Mammary epithelial cell (primary cell): ENCODE measurements at regions of chr9 and their contacts with region 1.

Region 1: GRCh38 chr9:98848450-98849149 is 41.1 kb downstream of the GALNT12 start:
- DNase-seq: peak; percentile 97
- H3K4me3 ChIP-seq: peak overlapping the region in 2 of 3 experiments; percentile 7 to 10
- H3K27ac ChIP-seq: no peak overlapping the region
- H3K4me1 ChIP-seq: peaks cover 17% of the 10 kb centered on the region
- H3K27me3 ChIP-seq: no peaks in the 10 kb centered on the region
- CTCF ChIP-seq: peak; percentile 97

Region 2: GRCh38 chr9:98922721-98923435 is 74.3 kb after region 1 on chr9:
- CTCF ChIA-PET with region 1: no interaction called
- dilution Hi-C with region 1: loop called (anchors 5 kb)
- in situ Hi-C with region 1: no loop called
- intact Hi-C with region 1: no loop called
- DNase-seq: no peak
- H3K4me3 ChIP-seq: no peak overlapping the region
- H3K27ac ChIP-seq: no peak overlapping the region
- H3K4me1 ChIP-seq: no peaks in the 10 kb centered on the region
- H3K27me3 ChIP-seq: peaks cover 7% of the 10 kb centered on the region
- CTCF ChIP-seq: no peak

Region 3: DNA sequence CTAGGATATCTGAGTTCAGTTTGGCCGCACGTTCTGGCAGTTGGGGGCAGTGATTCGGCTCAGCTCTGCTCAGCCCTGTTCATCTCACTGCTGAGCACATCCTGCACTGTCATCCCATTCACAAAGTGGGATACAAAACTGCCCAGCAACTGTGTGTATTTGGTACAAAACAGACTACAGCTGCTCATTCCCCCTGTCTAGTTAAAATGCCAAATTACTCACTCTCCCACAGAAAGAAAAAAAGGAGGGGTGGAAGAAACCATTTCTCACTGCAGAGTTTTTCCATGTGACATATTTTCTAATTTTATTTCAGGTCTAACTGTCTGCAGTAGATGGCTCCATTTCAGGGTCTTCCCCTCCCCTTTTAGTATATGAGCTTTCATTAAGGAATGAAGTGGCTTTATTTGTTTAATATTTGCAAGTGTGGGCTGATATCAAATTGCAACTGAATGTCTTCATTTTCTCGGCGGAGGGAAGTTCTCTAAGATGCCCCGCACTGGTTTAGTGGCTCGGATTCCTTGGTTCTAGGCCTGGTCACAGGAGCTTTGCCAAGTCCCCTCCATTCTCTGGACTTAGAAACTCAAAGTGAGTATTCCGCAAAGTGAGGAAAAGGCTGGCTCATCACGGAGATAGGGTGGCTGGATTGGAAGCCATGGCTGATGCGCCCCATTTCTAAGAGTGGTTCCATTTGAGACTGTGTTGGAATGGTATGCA is 109.8 kb after region 1 on chr9:
- CTCF ChIA-PET with region 1: no interaction called
- dilution Hi-C with region 1: no loop called
- in situ Hi-C with region 1: no loop called
- intact Hi-C with region 1: no loop called
- DNase-seq: no peak
- H3K4me3 ChIP-seq: no peak overlapping the region
- H3K27ac ChIP-seq: no peak overlapping the region
- H3K4me1 ChIP-seq: no peaks in the 10 kb centered on the region
- H3K27me3 ChIP-seq: peaks cover 2% of the 10 kb centered on the region
- CTCF ChIP-seq: no peak

Region 4: GRCh38 chr9:98974994-98975712 is 126.6 kb after region 1 on chr9:
- CTCF ChIA-PET with region 1: no interaction called
- dilution Hi-C with region 1: no loop called
- in situ Hi-C with region 1: no loop called
- intact Hi-C with region 1: loop called (anchors 1 kb)
- DNase-seq: peak; percentile 66
- H3K4me3 ChIP-seq: peak overlapping the region in 1 of 3 experiments; percentile 10
- H3K27ac ChIP-seq: no peak overlapping the region
- H3K4me1 ChIP-seq: peaks cover 10% of the 10 kb centered on the region
- H3K27me3 ChIP-seq: no peaks in the 10 kb centered on the region
- CTCF ChIP-seq: peak; percentile 96 to 99

Region 5: DNA sequence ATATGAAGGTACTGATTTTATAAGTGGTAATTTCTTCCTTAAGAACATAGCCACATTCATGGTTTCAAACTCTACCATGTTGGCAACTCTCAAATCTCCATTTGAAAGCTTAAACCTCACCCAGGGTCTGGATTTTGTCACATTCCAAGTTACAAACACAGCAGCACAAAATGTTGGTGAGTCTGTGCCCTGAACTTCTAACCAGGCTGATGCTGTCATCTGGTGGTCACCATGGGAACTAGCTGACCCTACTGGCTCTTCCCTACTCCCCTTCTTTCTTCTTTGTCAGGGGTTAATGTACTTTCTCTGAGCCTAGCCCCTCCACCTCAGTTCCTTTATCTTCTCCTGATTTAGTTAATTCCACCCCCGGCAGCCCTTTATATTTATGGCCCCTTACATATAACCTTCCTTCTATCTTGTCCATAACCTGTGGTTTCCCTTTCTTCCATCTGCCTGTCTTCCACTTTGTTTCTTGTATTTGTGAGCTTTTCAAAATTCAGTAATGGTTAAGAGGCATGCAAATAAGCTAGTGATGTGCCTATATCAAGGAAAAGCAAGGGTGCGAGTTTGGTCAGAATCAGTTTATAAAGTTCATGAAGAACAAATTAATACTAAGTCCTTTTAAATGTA is 292.2 kb after region 1 on chr9:
- CTCF ChIA-PET with region 1: no interaction called
- dilution Hi-C with region 1: no loop called
- in situ Hi-C with region 1: loop called (anchors 25 kb)
- intact Hi-C with region 1: loop called (anchors 1 kb)
- DNase-seq: peak; percentile 16
- H3K4me3 ChIP-seq: no peak overlapping the region
- H3K27ac ChIP-seq: no peak overlapping the region
- H3K4me1 ChIP-seq: no peaks in the 10 kb centered on the region
- H3K27me3 ChIP-seq: no peaks in the 10 kb centered on the region
- CTCF ChIP-seq: peak; percentile 92 to 95